PC-3 (cell line): ENCODE measurements at regions of chr11 and their contacts with region 1.

Region 1: GRCh38 chr11:46017341-46017740 is 94.9 kb downstream of the LARGE2 start:
- DNase-seq: no peak
- ATAC-seq: no peak
- H3K4me3 ChIP-seq: no peak overlapping the region
- H3K27ac ChIP-seq: no peak overlapping the region
- H3K4me1 ChIP-seq: 0 out of 2 replicates have a peak, but pooled peaks cover 3% of the 10 kb centered on the region
- H3K27me3 ChIP-seq: no peaks in the 10 kb centered on the region
- CTCF ChIP-seq: no peak

Region 2: DNA sequence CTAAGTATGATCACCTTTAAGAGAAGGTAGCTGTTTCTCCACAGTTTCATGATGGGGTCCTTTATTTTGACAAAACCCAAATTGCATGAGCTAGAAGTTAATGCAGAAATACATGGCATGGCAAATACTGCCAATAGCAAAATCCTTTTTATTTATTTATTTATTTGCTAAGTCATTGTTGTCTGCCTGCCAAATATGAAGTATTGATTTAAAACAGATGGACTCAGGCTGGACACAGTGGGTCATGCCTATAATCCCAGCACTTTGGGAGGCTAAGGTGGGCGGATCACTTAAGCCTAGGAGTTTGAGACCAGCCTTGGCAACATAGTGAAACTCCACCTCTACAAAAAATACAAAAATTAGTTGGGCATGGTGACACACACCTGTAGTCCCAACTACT is 42.5 kb before region 1 on chr11:
- CTCF ChIA-PET with region 1: interaction called, 10 read pairs
- POLR2A ChIA-PET with region 1: no interaction called
- intact Hi-C with region 1: no loop called
- DNase-seq: no peak
- ATAC-seq: no peak
- H3K4me3 ChIP-seq: no peak overlapping the region
- H3K27ac ChIP-seq: no peak overlapping the region
- H3K4me1 ChIP-seq: no peaks in the 10 kb centered on the region
- H3K27me3 ChIP-seq: no peaks in the 10 kb centered on the region
- CTCF ChIP-seq: no peak

Region 3: DNA sequence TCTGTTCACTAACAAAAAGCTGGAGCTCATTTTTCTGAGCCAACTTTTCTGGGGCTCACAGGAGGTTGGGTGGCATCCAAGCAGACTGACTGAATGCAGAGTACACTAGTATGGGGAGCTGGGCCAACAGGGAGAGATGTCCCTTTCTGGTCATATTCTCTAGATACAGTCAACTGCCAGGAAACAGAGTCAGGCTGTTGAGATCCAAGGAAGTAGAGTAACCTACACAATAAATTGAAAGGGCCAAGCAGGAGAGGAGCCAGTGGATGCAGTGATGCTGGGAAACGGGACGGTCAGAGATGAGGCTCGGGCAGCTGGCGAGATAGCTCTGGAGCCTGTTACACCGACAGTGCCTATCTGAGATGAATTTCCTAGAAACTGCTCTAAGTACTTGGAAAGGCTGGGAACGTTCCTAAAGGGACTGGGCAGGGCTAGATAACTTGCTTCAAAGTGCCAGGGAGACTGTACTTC is 23.8 kb before region 1 on chr11:
- CTCF ChIA-PET with region 1: no interaction called
- POLR2A ChIA-PET with region 1: no interaction called
- intact Hi-C with region 1: no loop called
- DNase-seq: no peak
- ATAC-seq: peak; percentile 24
- H3K4me3 ChIP-seq: no peak overlapping the region
- H3K27ac ChIP-seq: no peak overlapping the region
- H3K4me1 ChIP-seq: no peaks in the 10 kb centered on the region
- H3K27me3 ChIP-seq: no peaks in the 10 kb centered on the region
- CTCF ChIP-seq: no peak

Region 4: GRCh38 chr11:46034041-46034440 is 16.7 kb after region 1 on chr11:
- CTCF ChIA-PET with region 1: no interaction called
- POLR2A ChIA-PET with region 1: no interaction called
- intact Hi-C with region 1: no loop called
- DNase-seq: no peak
- ATAC-seq: no peak
- H3K4me3 ChIP-seq: no peak overlapping the region
- H3K27ac ChIP-seq: no peak overlapping the region
- H3K4me1 ChIP-seq: no peaks in the 10 kb centered on the region
- H3K27me3 ChIP-seq: no peaks in the 10 kb centered on the region
- CTCF ChIP-seq: no peak

Region 5: DNA sequence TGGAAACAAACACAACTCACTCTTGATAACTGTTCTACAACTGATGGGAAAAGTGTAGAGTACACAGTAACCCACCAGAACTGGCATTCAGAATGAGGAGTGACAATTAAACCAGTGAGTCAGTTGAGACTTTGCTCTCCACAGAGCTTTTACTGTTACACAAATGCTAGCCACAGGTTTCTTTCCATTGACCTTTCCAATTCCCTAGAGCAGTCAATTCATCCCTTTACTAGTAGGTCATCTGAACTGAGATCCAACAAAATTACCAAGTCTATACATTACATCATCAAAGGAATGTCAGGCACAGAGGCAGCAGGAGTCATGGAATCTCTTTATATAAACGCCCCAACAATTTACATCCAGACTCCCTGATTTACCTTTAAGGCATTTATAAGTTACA is 38.0 kb after region 1 on chr11:
- CTCF ChIA-PET with region 1: no interaction called
- POLR2A ChIA-PET with region 1: no interaction called
- intact Hi-C with region 1: no loop called
- DNase-seq: no peak
- ATAC-seq: no peak
- H3K4me3 ChIP-seq: no peak overlapping the region
- H3K27ac ChIP-seq: no peak overlapping the region
- H3K4me1 ChIP-seq: no peaks in the 10 kb centered on the region
- H3K27me3 ChIP-seq: no peaks in the 10 kb centered on the region
- CTCF ChIP-seq: no peak

Region 6: GRCh38 chr11:46298699-46299424 is 281.5 kb after region 1 on chr11:
- CTCF ChIA-PET with region 1: no interaction called
- POLR2A ChIA-PET with region 1: interaction called, 11 read pairs
- intact Hi-C with region 1: no loop called
- DNase-seq: peak; percentile 80
- ATAC-seq: peak; percentile 72
- H3K4me3 ChIP-seq: peak overlapping the region; percentile 36; the same call in 1 of the 2 replicates
- H3K27ac ChIP-seq: peak overlapping the region; percentile 83
- H3K4me1 ChIP-seq: peaks cover 44% of the 10 kb centered on the region
- H3K27me3 ChIP-seq: no peaks in the 10 kb centered on the region
- CTCF ChIP-seq: no peak